Spleen (tissue), 13 donors: ENCODE measurements at regions of chr21 and their contacts with region 1.

Region 1: GRCh38 chr21:26842976-26843932 is 2.0 kb downstream of the ADAMTS1 start:
- DNase-seq: peak; percentile 80
- H3K4me3 ChIP-seq: peak overlapping the region; percentile 45 to 81 (median 60)
- H3K27ac ChIP-seq: peak overlapping the region; percentile 46 to 93 (median 87)
- H3K4me1 ChIP-seq: peaks cover 13 to 87% (median 57%) of the 10 kb centered on the region in 6 donors
- H3K27me3 ChIP-seq: peaks cover 0 to 68% (median 38%) of the 10 kb centered on the region in 7 donors
- CTCF ChIP-seq: peak in 4 of 11 experiments; percentile 8 to 26 (median 18)
- POLR2A ChIP-seq: no peak

Region 2: DNA sequence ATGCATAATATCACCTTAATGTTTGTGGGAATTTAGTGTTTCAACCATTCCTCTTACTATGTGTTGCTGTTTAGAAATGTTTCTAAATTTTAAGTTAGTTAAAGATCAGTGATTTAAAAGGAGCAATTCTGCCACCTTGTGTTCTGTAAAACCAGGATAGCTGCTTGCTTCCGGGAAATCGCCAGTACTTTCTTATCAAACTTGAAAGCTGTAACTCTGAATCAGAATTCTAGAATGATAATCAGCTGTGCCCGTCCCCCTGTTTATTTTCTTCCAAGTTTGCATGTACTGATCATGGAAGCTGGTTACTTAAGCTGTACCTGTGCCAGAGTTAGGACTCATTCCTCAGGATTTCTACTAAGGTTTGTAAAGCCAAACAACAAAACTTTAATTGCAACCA is 1493.1 kb after region 1 on chr21:
- intact Hi-C with region 1: loop called (anchors 5 kb)
- DNase-seq: no peak
- H3K4me3 ChIP-seq: no peak overlapping the region
- H3K27ac ChIP-seq: no peak overlapping the region
- H3K4me1 ChIP-seq: peaks cover 0 to 22% (median 1%) of the 10 kb centered on the region in 6 donors
- H3K27me3 ChIP-seq: no peaks in the 10 kb centered on the region
- CTCF ChIP-seq: peak in 8 of 11 experiments; percentile 6 to 53 (median 41)
- POLR2A ChIP-seq: no peak